ENCODE measurements at regions of chr18 and their contacts with region 1.

Region 1: GRCh38 chr18:35143622-35144596 is 96.9 kb upstream of the ZNF397 start:
- DNase-seq: peak; percentile 46
- ATAC-seq: peak; percentile 96
- H3K4me3 ChIP-seq: no peak overlapping the region
- H3K27ac ChIP-seq: no peak overlapping the region
- H3K4me1 ChIP-seq: no peaks in the 10 kb centered on the region
- H3K27me3 ChIP-seq: no peaks in the 10 kb centered on the region
- CTCF ChIP-seq: peak; percentile 61

Region 2: DNA sequence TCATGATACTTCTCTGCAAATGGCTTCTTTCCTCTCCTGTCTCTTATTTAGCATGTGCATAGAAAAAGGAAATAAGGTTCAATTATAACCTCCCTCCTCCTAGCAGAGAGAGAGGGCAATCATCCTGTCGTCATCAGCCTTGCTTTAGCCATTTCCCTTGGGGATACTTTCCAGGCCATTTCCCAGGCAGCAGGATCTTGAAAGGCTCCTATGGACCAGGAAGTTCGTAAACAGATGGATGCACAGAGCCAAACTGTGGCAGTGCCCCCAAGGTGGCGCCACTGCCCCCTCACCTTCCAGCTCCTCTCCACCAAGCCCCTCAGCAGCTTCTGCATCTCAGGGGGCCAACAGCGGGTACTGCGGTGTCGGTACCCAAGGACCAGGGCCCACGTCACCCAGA is 276.4 kb before region 1 on chr18:
- CTCF ChIA-PET with region 1: interaction called, 4 read pairs
- POLR2A ChIA-PET with region 1: no interaction called
- intact Hi-C with region 1: loop called (anchors 2 kb)
- DNase-seq: no peak
- ATAC-seq: no peak
- H3K4me3 ChIP-seq: no peak overlapping the region
- H3K27ac ChIP-seq: no peak overlapping the region
- H3K4me1 ChIP-seq: no peaks in the 10 kb centered on the region
- H3K27me3 ChIP-seq: no peaks in the 10 kb centered on the region
- CTCF ChIP-seq: no peak; the same call in 1 of the 2 replicates

Region 3: GRCh38 chr18:34880882-34881834 is 262.8 kb before region 1 on chr18:
- CTCF ChIA-PET with region 1: no interaction called
- POLR2A ChIA-PET with region 1: no interaction called
- intact Hi-C with region 1: loop called (anchors 1 kb)
- DNase-seq: no peak
- ATAC-seq: no peak
- H3K4me3 ChIP-seq: no peak overlapping the region
- H3K27ac ChIP-seq: no peak overlapping the region
- H3K4me1 ChIP-seq: no peaks in the 10 kb centered on the region
- H3K27me3 ChIP-seq: no peaks in the 10 kb centered on the region
- CTCF ChIP-seq: peak; percentile 30; the same call in 1 of the 2 replicates

Region 4: DNA sequence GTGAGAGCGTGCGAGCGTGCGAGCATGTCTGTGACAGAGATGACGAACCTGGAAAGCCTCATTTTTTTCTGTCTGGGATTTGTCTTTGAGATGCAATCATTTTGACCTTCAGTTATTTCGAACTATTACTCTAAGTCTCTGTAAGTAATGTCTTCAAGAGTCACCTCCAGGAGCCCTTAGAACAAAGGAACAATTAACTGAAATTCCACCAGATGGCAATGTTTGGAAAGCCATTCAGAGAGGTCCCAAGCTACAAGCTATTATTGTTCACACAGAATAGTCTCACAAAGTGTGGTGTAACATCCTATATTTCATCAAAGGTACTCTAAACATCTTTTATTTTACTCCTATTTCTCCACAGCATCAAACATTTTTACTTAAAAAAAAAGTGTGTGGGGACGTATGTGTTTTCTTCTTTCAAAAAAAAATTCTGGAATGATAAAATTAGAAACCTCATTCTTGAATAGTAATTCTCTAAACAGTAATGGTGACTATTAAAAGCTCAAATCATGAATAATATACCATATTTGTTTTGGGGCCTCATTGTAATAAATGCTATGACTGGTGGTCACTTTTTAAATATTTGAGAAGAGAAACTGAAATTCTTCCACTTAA is 137.8 kb before region 1 on chr18:
- CTCF ChIA-PET with region 1: interaction called, 9 read pairs
- POLR2A ChIA-PET with region 1: interaction called, 4 read pairs
- intact Hi-C with region 1: loop called (anchors 1 kb)
- DNase-seq: peak; percentile 65
- ATAC-seq: peak; percentile 82
- H3K4me3 ChIP-seq: no peak overlapping the region
- H3K27ac ChIP-seq: no peak overlapping the region
- H3K4me1 ChIP-seq: no peaks in the 10 kb centered on the region
- H3K27me3 ChIP-seq: no peaks in the 10 kb centered on the region
- CTCF ChIP-seq: peak; percentile 53

Region 5: DNA sequence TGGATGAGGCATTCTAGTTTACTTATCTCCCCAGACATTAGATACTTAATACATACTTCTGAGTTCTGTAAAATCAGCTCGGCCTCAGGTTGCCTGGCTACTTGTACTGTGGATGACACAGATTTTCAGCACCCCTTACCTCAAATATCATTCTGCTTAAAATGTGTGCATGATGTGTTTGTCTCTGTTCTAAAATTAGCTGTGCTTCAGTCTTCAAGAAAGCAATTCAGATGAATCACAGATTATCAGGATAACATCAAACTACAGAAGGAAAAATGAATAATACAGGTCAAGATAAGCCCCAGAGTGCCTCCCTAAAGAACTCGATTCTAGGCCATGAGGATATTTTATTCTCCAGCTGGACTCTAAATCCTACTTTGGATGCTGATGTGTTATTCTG is 124.0 kb before region 1 on chr18:
- CTCF ChIA-PET with region 1: interaction called, 13 read pairs
- POLR2A ChIA-PET with region 1: no interaction called
- intact Hi-C with region 1: no loop called
- DNase-seq: no peak
- ATAC-seq: no peak
- H3K4me3 ChIP-seq: no peak overlapping the region
- H3K27ac ChIP-seq: no peak overlapping the region
- H3K4me1 ChIP-seq: no peaks in the 10 kb centered on the region
- H3K27me3 ChIP-seq: 0 out of 2 replicates have a peak, but pooled peaks cover 4% of the 10 kb centered on the region
- CTCF ChIP-seq: no peak

Region 6: GRCh38 chr18:35106845-35107148 is 37.1 kb before region 1 on chr18:
- CTCF ChIA-PET with region 1: interaction called, 12 read pairs
- POLR2A ChIA-PET with region 1: no interaction called
- intact Hi-C with region 1: no loop called
- DNase-seq: peak; percentile 12
- ATAC-seq: peak; percentile 60
- H3K4me3 ChIP-seq: no peak overlapping the region
- H3K27ac ChIP-seq: peak overlapping the region; percentile 71
- H3K4me1 ChIP-seq: no peaks in the 10 kb centered on the region
- H3K27me3 ChIP-seq: no peaks in the 10 kb centered on the region
- CTCF ChIP-seq: no peak

Measured in PC-3 (cell line).